Activated CD4-positive, alpha-beta memory T cell treated with anti-CD3 and anti-CD28 coated beads for 36 hours (primary cell): ENCODE measurements at regions of chr14 and their contacts with region 1.

Region 1: GRCh38 chr14:91021991-91022621 is 38.3 kb downstream of the RPS6KA5 start:
- DNase-seq: no peak
- H3K4me3 Mint-ChIP-seq: peak overlapping the region; percentile 54
- H3K27ac Mint-ChIP-seq: peak overlapping the region; percentile 86
- H3K4me1 Mint-ChIP-seq: peaks cover 65% of the 10 kb centered on the region
- H3K27me3 Mint-ChIP-seq: no peaks in the 10 kb centered on the region

Region 2: GRCh38 chr14:91009501-91010152 is 12.5 kb before region 1 on chr14:
- CTCF ChIA-PET with region 1: no interaction called
- POLR2A ChIA-PET with region 1: no interaction called
- intact Hi-C with region 1: no loop called
- DNase-seq: no peak
- H3K4me3 Mint-ChIP-seq: no peak overlapping the region
- H3K27ac Mint-ChIP-seq: peak overlapping the region; percentile 2
- H3K4me1 Mint-ChIP-seq: peaks cover 42% of the 10 kb centered on the region
- H3K27me3 Mint-ChIP-seq: no peaks in the 10 kb centered on the region

Region 3: DNA sequence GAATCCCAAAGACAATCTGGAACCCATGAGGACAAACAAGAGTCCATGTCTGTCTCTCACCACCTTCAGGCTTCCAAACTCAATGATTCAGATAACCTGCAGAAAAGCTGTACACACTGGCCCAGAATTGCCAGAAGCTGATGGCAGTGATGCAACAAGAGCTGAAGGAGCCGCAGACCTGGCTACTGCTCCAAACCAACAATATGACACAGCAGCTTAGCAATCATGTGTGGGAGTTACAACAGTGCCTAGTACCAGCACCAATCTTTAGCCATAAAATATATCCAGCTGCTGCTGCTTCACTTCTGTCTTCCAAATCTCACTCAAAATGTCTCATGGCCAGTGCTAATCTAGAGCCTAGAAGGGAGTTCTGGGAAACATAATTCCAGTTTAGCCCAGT is 16.3 kb after region 1 on chr14:
- CTCF ChIA-PET with region 1: interaction called, 4 read pairs
- POLR2A ChIA-PET with region 1: interaction called, 4 read pairs
- intact Hi-C with region 1: loop called (anchors 1 kb)
- DNase-seq: peak; percentile 45
- H3K4me3 Mint-ChIP-seq: no peak overlapping the region
- H3K27ac Mint-ChIP-seq: peak overlapping the region; percentile 42
- H3K4me1 Mint-ChIP-seq: peaks cover 75% of the 10 kb centered on the region
- H3K27me3 Mint-ChIP-seq: no peaks in the 10 kb centered on the region

Region 4: GRCh38 chr14:91078095-91078737 is 56.1 kb after region 1 on chr14:
- CTCF ChIA-PET with region 1: no interaction called
- POLR2A ChIA-PET with region 1: interaction called, 4 read pairs
- intact Hi-C with region 1: loop called (anchors 1 kb)
- DNase-seq: peak; percentile 76
- H3K4me3 Mint-ChIP-seq: peak overlapping the region; percentile 13
- H3K27ac Mint-ChIP-seq: peak overlapping the region; percentile 87
- H3K4me1 Mint-ChIP-seq: peaks cover 30% of the 10 kb centered on the region
- H3K27me3 Mint-ChIP-seq: no peaks in the 10 kb centered on the region

Region 5: DNA sequence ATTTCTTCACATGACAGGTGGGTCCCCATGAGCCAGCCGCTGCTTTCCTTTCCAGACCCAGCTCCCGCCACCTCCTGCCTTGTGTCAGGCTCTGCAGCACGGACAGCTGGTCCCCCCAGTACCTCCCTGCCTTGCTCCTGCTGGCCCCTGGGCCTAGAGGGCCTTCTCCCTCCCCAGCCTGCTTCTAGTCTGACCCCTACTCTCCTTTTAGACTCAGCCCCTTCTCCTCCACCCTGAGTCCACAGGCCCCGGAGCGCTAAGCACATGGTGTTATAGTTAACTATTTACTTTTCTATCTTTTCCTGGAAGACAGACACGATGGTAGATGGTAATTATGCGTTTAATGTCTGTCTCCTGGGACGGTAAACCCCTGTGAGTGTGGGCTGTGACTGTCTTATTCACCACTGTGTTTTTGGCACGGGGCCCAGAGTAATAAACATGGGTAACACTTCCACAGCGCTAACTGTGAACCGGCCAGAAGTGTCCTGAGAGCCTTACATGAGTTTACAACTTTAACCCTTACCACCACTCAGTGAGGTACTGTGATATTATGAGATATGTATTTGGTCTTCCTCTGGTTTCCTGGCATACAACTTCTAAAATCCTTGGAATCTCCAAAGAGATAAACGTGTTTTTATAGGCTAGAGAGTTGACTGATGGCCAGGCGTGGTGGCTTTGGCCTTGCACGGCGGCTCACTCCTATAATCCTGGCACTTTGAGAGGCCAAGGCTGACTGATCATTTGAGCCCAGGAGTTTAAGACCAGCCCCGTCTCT is 132.9 kb after region 1 on chr14:
- CTCF ChIA-PET with region 1: no interaction called
- POLR2A ChIA-PET with region 1: no interaction called
- intact Hi-C with region 1: no loop called
- DNase-seq: peak; percentile 31
- H3K4me3 Mint-ChIP-seq: no peak overlapping the region
- H3K27ac Mint-ChIP-seq: no peak overlapping the region
- H3K4me1 Mint-ChIP-seq: peaks cover 9% of the 10 kb centered on the region
- H3K27me3 Mint-ChIP-seq: no peaks in the 10 kb centered on the region